ENCODE measurements at regions of chr7 and their contacts with region 1.

Region 1: DNA sequence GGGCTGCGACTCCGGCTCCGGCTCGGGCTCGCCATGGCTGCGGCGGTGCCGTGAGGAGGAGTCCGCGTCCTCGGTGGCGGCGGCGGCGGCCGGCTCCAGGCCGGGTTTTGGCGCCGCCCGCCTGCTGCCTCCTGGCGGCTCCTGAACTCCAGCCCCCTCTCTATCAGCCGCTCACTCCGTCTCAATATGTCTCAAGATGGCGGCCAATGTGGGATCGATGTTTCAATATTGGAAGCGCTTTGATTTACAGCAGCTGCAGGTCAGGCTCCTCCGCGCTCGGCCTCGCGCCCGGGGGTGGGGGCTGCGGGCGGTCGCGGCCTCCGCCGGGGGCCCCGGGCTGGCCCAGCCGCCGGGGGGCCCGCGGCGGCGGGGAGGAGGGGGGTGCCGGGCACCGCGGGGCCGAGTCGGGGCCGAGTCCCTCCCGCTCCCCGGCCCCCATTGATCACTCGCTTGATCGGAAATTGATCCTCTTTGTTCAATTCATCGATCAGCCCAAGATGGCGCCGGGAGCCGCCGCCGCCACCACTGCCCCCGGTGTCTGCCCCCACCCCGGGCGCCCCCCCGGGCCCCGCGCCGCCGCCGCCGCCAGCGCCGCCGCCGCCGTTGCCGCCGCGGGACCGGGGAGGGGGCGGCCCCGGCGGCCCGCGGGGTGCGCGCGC is 1.5 kb upstream of the CUX1 start:
- DNase-seq: peak; percentile 85
- ATAC-seq: peak; percentile 78
- H3K4me3 Mint-ChIP-seq: peak overlapping the region; percentile 72
- H3K27ac Mint-ChIP-seq: peak overlapping the region; percentile 42
- H3K4me1 Mint-ChIP-seq: peaks cover 26% of the 10 kb centered on the region
- H3K27me3 Mint-ChIP-seq: peaks cover 2% of the 10 kb centered on the region

Region 2: DNA sequence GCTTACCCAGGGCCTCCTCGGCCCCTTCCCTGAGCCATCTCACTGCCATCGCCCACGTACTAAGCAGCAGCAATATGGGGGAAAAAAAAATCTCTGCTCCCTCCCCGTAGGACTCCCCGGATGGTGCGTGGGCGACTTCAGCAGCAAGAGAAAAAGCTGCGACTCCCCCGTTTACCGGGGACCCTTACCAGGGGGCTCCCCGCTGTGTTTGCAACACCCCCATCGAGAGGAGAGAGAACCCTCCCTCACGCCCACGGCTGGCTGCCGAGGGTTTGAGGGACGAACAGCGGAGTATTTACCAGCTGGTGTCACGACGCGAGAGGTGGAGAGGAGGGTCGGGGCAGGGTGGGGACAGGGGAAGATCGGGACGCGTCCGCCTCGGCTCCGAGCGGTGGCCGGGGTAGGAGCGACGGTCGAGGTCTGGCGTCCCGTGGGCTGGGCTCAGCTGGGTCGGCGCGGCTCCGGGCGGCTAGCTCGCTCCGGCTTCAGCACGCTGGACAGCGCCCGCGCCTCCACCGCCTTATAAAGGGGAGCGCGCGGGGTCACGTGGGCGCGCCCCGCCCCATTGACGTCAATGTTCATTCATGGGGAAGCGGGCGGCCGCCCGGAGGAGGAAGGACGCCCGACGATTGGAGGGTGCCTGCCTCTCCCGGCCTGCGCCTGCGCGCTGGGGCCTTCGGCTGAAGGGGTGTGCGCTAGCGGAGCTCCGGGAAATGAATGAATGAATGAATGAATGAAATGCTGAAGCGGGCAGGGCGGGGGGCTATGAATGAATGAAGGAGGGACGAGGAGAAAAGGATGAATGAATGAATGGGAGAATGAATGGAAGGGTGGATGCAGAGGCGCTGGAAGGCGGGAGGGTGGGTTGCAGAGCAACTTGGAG is 650.6 kb before region 1 on chr7 and contains the start of gene VGF:
- CTCF ChIA-PET with region 1: no interaction called
- POLR2A ChIA-PET with region 1: no interaction called
- intact Hi-C with region 1: loop called in 1 of 2 experiments (anchors 10 kb)
- DNase-seq: peak; percentile 97
- ATAC-seq: peak; percentile 79
- H3K4me3 Mint-ChIP-seq: peak within 1 kb of the TSS; percentile 66
- H3K27ac Mint-ChIP-seq: peak within 1 kb of the TSS; percentile 38
- H3K4me1 Mint-ChIP-seq: peaks cover 57% of the 10 kb centered on the region
- H3K27me3 Mint-ChIP-seq: peaks cover 52% of the 10 kb centered on the region
- total RNA-seq, gene VGF: 0.09 to 0.11 TPM

Region 3: DNA sequence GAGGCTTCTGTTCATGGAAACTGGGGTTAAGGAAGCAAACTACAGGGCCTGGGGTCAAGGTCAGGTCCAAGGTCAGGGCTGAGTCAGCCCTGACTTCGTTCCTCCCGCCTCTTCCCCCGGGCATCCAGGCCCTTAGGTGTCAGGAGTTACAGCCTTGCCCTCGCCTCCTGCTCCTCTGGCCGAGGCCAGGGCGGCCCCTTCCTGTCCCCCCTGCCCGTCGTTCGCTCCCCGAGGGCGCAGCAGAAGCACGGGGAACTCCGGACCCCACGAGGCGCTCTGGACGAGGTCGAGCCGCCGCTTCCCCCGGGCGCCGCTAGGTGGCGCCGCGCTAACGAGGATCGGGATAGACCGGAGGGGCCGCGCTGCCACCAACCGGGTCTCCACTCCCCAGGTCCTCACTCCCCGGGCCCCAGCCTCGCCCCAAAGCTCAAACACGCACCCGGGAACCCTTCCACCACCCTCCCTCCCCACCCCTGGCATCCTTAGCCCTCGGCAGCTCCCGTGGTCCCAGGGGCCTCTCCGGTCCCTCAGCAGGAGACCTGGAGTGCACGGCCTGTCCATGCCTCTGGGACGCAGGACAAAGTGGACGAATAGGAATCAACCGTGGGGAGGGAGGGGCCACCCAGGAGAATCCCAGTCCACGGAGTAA is 127.7 kb before region 1 on chr7:
- CTCF ChIA-PET with region 1: no interaction called
- POLR2A ChIA-PET with region 1: no interaction called
- intact Hi-C with region 1: loop called (anchors 1 to 2 kb)
- DNase-seq: peak; percentile 90
- ATAC-seq: peak; percentile 94
- H3K4me3 Mint-ChIP-seq: no peak overlapping the region
- H3K27ac Mint-ChIP-seq: no peak overlapping the region
- H3K4me1 Mint-ChIP-seq: no peaks in the 10 kb centered on the region
- H3K27me3 Mint-ChIP-seq: peaks cover 5% of the 10 kb centered on the region

Region 4: GRCh38 chr7:101856473-101857357 is 40.8 kb after region 1 on chr7:
- CTCF ChIA-PET with region 1: interaction called, 4 read pairs
- POLR2A ChIA-PET with region 1: no interaction called
- intact Hi-C with region 1: loop called (anchors 1 to 2 kb)
- DNase-seq: peak; percentile 89
- ATAC-seq: peak; percentile 91
- H3K4me3 Mint-ChIP-seq: peak overlapping the region; percentile 85
- H3K27ac Mint-ChIP-seq: peak overlapping the region; percentile 97
- H3K4me1 Mint-ChIP-seq: peaks cover 42% of the 10 kb centered on the region
- H3K27me3 Mint-ChIP-seq: no peaks in the 10 kb centered on the region

Region 5: DNA sequence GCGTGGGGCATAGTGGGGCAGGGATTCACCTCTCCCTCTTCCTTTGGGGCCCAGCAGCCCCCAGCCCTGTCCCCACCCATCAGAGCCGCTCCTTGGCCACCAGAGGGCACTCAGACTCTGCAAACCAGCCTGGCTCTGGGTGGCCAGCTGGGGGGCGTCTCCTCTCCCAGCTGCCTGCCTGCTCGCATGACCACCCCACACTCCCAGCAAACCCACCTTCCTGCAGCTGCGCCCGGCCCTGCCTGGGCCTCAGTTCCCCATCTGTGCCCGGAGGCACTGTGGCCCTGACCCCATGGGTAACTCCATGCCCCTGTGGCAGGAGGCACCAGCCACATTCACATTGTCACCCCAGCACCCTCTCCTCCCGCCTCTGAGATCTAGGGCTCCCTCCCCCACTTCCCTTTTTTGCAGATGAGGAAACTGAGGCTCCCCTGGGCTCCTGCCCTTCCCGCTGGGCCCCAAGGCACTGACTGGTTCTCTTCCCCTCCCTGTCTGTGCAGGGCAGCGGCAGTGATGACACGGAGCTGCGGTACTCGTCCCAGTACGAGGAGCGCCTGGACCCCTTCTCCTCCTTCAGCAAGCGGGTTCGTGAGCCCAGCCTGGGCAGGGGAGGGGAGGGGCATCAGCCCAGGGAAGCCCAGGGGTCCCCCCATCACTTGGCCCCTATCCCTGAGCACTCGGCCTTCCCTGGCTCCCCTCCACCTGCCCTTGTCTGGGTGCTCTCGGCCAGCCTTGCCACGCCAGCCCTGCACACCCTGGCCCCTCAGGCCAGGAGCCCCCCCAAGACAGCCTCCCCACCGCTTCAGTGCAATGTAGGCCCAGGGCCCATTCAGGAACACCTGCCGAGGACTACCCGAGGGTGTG is 463.8 kb after region 1 on chr7:
- CTCF ChIA-PET with region 1: no interaction called
- POLR2A ChIA-PET with region 1: no interaction called
- intact Hi-C with region 1: loop called in 1 of 2 experiments (anchors 10 kb)
- DNase-seq: peak; percentile 79
- ATAC-seq: peak; percentile 92
- H3K4me3 Mint-ChIP-seq: no peak overlapping the region
- H3K27ac Mint-ChIP-seq: no peak overlapping the region
- H3K4me1 Mint-ChIP-seq: peaks cover 12% of the 10 kb centered on the region
- H3K27me3 Mint-ChIP-seq: peaks cover under 1% of the 10 kb centered on the region

Measured in activated CD4-positive, alpha-beta T cell treated with anti-CD3 and anti-CD28 coated beads for 36 hours (primary cell).